ENCODE measurements at regions of chr11 and their contacts with region 1.

Region 1: GRCh38 chr11:6377902-6378639 is 12.2 kb upstream of the SMPD1 start:
- DNase-seq: peak in 1 of 2 donors; percentile 50
- ATAC-seq: peak in 1 of 3 donors; percentile 33
- H3K4me3 ChIP-seq: no peak overlapping the region
- H3K4me3 Mint-ChIP-seq: no peak overlapping the region
- H3K27ac ChIP-seq: peak overlapping the region; percentile 3
- H3K27ac Mint-ChIP-seq: no peak overlapping the region
- H3K4me1 ChIP-seq: peaks cover 4% of the 10 kb centered on the region
- H3K4me1 Mint-ChIP-seq: no peaks in the 10 kb centered on the region
- H3K27me3 ChIP-seq: no peaks in the 10 kb centered on the region
- H3K27me3 Mint-ChIP-seq: no peaks in the 10 kb centered on the region
- CTCF ChIP-seq: no peak

Region 2: GRCh38 chr11:6443269-6444003 is 65.4 kb after region 1 on chr11:
- intact Hi-C with region 1: loop called (anchors 1 kb)
- DNase-seq: peak; percentile 45 to 82
- ATAC-seq: peak; percentile 66 to 96 (median 89)
- H3K4me3 ChIP-seq: no peak overlapping the region
- H3K4me3 Mint-ChIP-seq: no peak overlapping the region
- H3K27ac ChIP-seq: no peak overlapping the region
- H3K27ac Mint-ChIP-seq: no peak overlapping the region
- H3K4me1 ChIP-seq: peaks cover 5% of the 10 kb centered on the region
- H3K4me1 Mint-ChIP-seq: no peaks in the 10 kb centered on the region
- H3K27me3 ChIP-seq: no peaks in the 10 kb centered on the region
- H3K27me3 Mint-ChIP-seq: no peaks in the 10 kb centered on the region
- CTCF ChIP-seq: peak; percentile 82

Region 3: GRCh38 chr11:6505577-6506240 is 127.6 kb after region 1 on chr11:
- intact Hi-C with region 1: loop called (anchors 1 kb)
- DNase-seq: peak in 1 of 2 donors; percentile 68
- ATAC-seq: peak; percentile 64 to 73 (median 72)
- H3K4me3 ChIP-seq: no peak overlapping the region
- H3K4me3 Mint-ChIP-seq: no peak overlapping the region
- H3K27ac ChIP-seq: no peak overlapping the region
- H3K27ac Mint-ChIP-seq: peak overlapping the region in 1 of 2 donors; percentile 37
- H3K4me1 ChIP-seq: no peaks in the 10 kb centered on the region
- H3K4me1 Mint-ChIP-seq: no peaks in the 10 kb centered on the region
- H3K27me3 ChIP-seq: no peaks in the 10 kb centered on the region
- H3K27me3 Mint-ChIP-seq: no peaks in the 10 kb centered on the region
- CTCF ChIP-seq: peak; percentile 69

Region 4: GRCh38 chr11:6705905-6706535 is 327.9 kb after region 1 on chr11:
- intact Hi-C with region 1: loop called (anchors 5 kb)
- DNase-seq: peak in 1 of 2 donors; percentile 73
- ATAC-seq: peak; percentile 58 to 82 (median 65)
- H3K4me3 ChIP-seq: no peak overlapping the region
- H3K4me3 Mint-ChIP-seq: no peak overlapping the region
- H3K27ac ChIP-seq: peak overlapping the region; percentile 26
- H3K27ac Mint-ChIP-seq: peak overlapping the region; percentile 47 to 84
- H3K4me1 ChIP-seq: no peaks in the 10 kb centered on the region
- H3K4me1 Mint-ChIP-seq: peaks cover 24 to 29% of the 10 kb centered on the region in 2 donors
- H3K27me3 ChIP-seq: no peaks in the 10 kb centered on the region
- H3K27me3 Mint-ChIP-seq: no peaks in the 10 kb centered on the region
- CTCF ChIP-seq: peak; percentile 87

Measured in natural killer cell (primary cell).